Activated CD8-positive, alpha-beta T cell treated with anti-CD3 and anti-CD28 coated beads, Interleukin-2, amount 10 ng/mL, durations not matched to agents 7 days and 5 days (primary cell): ENCODE measurements at regions of chr2 and their contacts with region 1.

Region 1: DNA sequence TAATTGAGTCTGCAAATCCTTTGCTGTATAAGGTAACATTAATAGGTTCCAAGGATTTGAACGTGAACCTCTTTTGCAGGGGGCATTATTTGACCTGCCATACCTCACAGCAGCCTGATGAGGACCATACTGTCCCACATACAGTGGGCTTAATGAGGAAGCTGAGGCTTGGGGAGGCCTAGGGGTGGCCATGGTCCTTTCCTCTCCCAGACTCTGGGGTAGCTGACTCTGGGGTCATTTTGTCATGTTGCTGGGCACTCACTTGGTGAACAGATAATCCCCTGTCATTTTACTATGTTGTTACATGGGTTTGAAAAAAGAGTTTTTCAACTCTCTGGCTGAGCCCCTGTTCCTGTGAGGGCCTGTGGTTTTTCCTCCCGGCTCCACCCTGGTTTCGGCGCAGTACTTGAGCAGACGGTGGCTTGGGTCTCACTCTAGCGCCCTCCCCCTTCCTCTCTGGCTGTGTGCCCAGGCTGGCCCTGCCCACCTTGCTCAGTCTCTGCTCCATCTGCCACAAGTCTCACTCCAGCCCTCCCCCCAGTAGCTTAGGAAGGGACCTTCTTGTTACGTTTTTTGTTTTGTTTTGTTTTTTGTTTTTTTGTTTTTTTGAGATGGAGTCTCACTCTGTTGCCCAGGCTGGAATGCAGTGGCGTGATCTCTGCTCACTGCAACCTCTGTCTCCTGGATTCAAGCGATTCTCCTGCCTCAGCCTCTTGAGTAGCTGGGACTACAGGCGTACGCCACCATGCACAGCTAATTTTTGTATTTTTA is 21.0 kb downstream of the INPP4A start:
- DNase-seq: peak; percentile 86
- ATAC-seq: peak; percentile 57
- H3K4me3 Mint-ChIP-seq: peak overlapping the region; percentile 73
- H3K27ac Mint-ChIP-seq: peak overlapping the region; percentile 94
- H3K4me1 Mint-ChIP-seq: peaks cover 89% of the 10 kb centered on the region
- H3K27me3 Mint-ChIP-seq: no peaks in the 10 kb centered on the region

Region 2: DNA sequence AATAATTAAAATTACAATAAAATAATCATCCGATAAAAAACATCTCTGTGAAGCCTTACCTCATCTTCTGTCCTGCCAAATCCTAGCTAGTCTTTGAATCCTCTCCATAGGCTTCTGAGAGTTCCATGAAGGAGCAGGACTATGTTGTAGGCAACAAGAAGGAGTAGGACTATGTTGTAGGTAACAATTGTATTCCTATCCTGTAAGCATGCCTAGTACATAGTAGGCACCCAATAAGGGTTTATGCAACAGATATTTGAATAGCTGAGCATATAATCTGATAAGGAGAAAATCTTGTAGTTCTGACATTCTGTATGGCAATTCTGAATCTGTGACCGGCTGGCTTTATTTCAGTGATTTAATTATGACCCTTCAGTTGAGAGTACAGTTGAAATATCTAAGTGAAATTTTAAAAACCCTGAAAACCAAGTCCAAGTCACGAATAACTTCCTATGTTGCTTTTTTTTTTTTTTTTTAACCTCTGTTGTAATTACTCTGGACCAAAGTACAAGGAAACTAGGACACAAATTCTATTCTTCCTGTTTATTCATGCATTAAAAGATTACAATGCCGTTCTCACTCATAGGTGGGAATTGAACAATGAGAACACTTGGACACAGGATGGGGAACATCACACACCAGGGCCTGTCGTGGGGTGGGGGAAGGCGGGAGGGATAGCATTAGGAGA is 350.9 kb before region 1 on chr2:
- CTCF ChIA-PET with region 1: no interaction called
- POLR2A ChIA-PET with region 1: no interaction called
- DNase-seq: no peak
- ATAC-seq: no peak
- H3K4me3 Mint-ChIP-seq: no peak overlapping the region
- H3K27ac Mint-ChIP-seq: no peak overlapping the region
- H3K4me1 Mint-ChIP-seq: no peaks in the 10 kb centered on the region
- H3K27me3 Mint-ChIP-seq: peaks cover 27% of the 10 kb centered on the region

Region 3: DNA sequence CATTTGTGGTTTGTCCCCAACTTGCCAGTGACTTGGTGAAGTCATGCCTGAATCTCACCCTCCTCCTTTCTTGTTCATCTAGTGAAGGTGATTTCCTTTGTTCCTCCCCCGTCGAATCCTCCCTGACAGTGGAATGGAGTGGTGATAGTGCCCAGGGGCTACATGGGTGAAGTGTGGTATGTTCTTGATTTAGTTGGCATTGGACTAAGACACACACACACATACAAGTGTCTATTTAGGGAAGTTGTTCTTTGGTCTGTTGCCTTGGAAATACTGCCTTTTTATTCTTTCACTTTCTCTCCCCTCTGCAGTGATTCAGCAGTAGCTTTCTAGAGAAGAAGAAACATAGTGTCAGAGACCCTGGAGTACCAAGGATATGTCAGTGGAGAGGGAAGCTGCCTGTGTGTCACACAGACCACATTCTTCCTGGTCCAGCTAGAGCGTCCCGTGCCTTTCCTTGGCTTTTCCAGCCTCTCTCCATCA is 10.1 kb before region 1 on chr2:
- CTCF ChIA-PET with region 1: interaction called, 34 read pairs
- POLR2A ChIA-PET with region 1: interaction called, 28 read pairs
- DNase-seq: no peak
- ATAC-seq: peak; percentile 54
- H3K4me3 Mint-ChIP-seq: peak overlapping the region; percentile 71
- H3K27ac Mint-ChIP-seq: peak overlapping the region; percentile 93
- H3K4me1 Mint-ChIP-seq: peaks cover 95% of the 10 kb centered on the region
- H3K27me3 Mint-ChIP-seq: no peaks in the 10 kb centered on the region

Region 4: GRCh38 chr2:98479959-98480524 is 14.4 kb after region 1 on chr2:
- CTCF ChIA-PET with region 1: interaction called, 53 read pairs
- POLR2A ChIA-PET with region 1: interaction called, 43 read pairs
- DNase-seq: peak; percentile 62
- ATAC-seq: peak; percentile 61
- H3K4me3 Mint-ChIP-seq: peak overlapping the region; percentile 64
- H3K27ac Mint-ChIP-seq: peak overlapping the region; percentile 93
- H3K4me1 Mint-ChIP-seq: peaks cover 100% of the 10 kb centered on the region
- H3K27me3 Mint-ChIP-seq: no peaks in the 10 kb centered on the region

Region 5: DNA sequence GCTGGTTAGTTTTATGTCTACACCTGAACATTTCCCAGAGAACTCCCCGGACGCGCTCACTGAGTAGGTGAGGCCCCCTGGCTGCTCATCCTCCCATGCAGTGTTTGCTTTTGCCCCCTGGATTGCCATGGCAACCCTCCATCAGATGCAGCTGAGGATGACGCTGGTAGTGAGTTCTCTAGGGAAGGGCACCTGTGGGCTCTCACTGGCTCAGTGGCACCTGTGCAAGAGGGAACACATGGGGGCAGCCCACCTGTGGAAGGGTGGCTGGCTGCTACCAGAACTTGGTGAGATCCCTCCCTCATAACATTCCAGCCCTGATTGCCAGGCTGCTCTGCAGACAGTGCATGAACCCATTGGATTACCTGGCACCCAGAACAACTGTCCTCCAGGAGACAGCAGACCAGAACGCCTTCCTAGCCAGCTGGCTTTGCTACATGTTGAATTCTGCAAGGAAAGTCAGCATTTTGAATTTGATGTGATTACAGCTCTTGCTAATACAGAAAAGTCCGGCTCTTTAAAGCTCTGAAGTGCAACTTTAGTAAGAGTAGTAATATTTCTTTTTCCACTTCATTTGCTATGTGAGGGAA is 121.0 kb after region 1 on chr2:
- CTCF ChIA-PET with region 1: no interaction called
- POLR2A ChIA-PET with region 1: no interaction called
- DNase-seq: no peak
- ATAC-seq: no peak
- H3K4me3 Mint-ChIP-seq: no peak overlapping the region
- H3K27ac Mint-ChIP-seq: no peak overlapping the region
- H3K4me1 Mint-ChIP-seq: peaks cover 18% of the 10 kb centered on the region
- H3K27me3 Mint-ChIP-seq: no peaks in the 10 kb centered on the region

Region 6: DNA sequence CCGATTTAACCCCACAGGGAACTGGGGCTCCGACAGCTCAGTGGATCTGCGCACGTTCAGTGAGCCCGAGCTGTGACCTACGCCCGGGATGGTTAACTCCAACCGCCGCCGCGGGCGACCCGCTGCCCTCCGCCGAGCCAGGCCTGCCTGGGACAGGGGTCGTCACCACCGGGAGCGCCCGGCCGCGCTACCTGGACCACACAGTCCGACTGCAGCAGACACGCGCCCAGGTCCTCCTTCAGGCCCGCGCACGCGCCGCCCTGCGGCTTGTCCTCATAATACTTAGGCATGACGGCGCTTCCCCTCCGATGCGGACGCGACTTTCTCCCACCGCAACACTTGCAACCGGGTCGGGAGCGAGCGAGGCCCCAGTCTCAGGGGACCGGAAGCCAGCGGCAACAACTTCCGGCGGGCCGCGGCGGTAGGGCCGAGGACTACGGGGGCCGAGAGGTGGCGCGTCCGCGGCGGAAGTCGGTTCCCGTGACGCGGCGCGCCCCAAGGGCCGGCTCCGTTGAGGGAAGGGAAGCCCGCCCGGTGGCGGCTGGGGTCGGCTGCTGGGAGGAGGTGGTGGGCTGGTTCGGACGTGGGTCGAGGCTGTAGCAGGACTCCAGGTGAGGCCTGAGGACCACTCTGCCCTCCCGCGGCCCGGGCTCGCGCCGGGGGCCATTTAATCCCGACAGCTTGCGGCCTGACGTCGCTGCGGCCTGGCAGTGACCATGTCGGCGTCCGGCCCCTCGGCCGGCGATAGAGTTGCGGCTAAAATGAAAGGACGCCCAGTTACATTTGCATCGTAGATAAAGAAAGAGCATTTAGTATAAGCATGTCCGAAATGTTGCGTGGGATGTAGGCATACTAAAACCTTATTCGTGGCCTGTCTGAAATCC is 142.7 kb after region 1 on chr2 and contains the starts of genes COA5 and UNC50:
- CTCF ChIA-PET with region 1: no interaction called
- POLR2A ChIA-PET with region 1: no interaction called
- DNase-seq: peak; percentile 93
- ATAC-seq: peak; percentile 92
- H3K4me3 Mint-ChIP-seq: peak within 1 kb of the TSS; percentile 91
- H3K27ac Mint-ChIP-seq: peak within 1 kb of the TSS; percentile 95
- H3K4me1 Mint-ChIP-seq: peaks cover 58% of the 10 kb centered on the region
- H3K27me3 Mint-ChIP-seq: no peaks in the 10 kb centered on the region
- total RNA-seq, gene COA5: 18.8 to 21.8 TPM
- total RNA-seq, gene UNC50: 25.5 to 26.1 TPM